Mammary epithelial cell (primary cell): ENCODE measurements at regions of chr3 and their contacts with region 1.

Region 1: GRCh38 chr3:33787328-33788009 is 11.0 kb upstream of the PDCD6IP start:
- DNase-seq: peak; percentile 58
- H3K4me3 ChIP-seq: no peak overlapping the region
- H3K27ac ChIP-seq: no peak overlapping the region
- H3K4me1 ChIP-seq: peaks cover 31% of the 10 kb centered on the region
- H3K27me3 ChIP-seq: no peaks in the 10 kb centered on the region
- CTCF ChIP-seq: peak; percentile 83 to 94

Region 2: DNA sequence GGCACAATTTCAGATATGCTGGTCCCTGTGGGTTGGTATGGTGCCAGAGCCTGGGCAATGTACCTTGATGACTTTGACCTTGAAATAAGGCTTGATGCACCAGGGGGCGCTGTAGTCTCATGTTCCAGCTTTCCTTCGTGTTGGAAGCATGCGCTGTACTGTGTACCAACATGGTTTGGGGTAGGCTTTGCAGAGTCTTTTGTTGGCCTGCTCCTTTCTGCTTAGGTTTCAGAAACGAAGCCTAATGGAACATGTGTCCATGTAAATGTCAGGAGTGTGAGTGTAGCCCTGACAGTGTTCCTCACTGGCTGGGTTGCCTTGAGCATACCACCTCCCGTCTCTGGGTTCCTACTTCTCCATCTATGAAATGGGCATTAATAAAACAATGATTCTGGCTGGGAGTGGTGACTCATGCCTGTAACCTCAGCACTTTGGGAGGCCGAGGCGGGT is 839.7 kb before region 1 on chr3:
- CTCF ChIA-PET with region 1: no interaction called
- dilution Hi-C with region 1: no loop called
- in situ Hi-C with region 1: no loop called
- intact Hi-C with region 1: loop called (anchors 5 kb)
- DNase-seq: peak; percentile 76
- H3K4me3 ChIP-seq: no peak overlapping the region
- H3K27ac ChIP-seq: no peak overlapping the region
- H3K4me1 ChIP-seq: no peaks in the 10 kb centered on the region
- H3K27me3 ChIP-seq: no peaks in the 10 kb centered on the region
- CTCF ChIP-seq: peak; percentile 73 to 87

Region 3: GRCh38 chr3:33392703-33393125 is 394.8 kb before region 1 on chr3:
- CTCF ChIA-PET with region 1: no interaction called
- dilution Hi-C with region 1: no loop called
- in situ Hi-C with region 1: no loop called
- intact Hi-C with region 1: loop called (anchors 10 kb)
- DNase-seq: peak; percentile 87
- H3K4me3 ChIP-seq: no peak overlapping the region
- H3K27ac ChIP-seq: peak overlapping the region; percentile 43
- H3K4me1 ChIP-seq: peaks cover 16% of the 10 kb centered on the region
- H3K27me3 ChIP-seq: no peaks in the 10 kb centered on the region
- CTCF ChIP-seq: no peak

Region 4: DNA sequence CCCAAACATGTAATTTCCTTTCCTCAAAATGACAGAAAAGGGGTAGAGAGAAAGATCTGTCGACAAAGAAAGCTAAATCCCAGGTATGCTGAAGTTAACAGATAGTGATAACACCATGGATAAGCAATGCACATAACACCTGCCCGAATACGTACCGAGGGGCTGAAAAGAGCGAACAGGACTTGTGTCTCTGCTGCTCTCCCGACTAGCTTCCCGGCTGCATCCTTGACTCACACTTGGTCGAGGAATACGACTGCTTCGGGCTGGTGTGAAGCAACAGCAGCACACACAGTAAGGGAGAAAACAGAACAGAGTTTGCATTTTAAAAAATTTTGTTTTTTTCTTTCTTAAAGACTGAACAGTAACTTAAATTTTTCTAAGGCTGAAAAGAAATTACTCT is 205.8 kb before region 1 on chr3:
- CTCF ChIA-PET with region 1: interaction called, 17 read pairs
- dilution Hi-C with region 1: no loop called
- in situ Hi-C with region 1: no loop called
- intact Hi-C with region 1: no loop called
- DNase-seq: no peak
- H3K4me3 ChIP-seq: no peak overlapping the region
- H3K27ac ChIP-seq: no peak overlapping the region
- H3K4me1 ChIP-seq: peaks cover 18% of the 10 kb centered on the region
- H3K27me3 ChIP-seq: no peaks in the 10 kb centered on the region
- CTCF ChIP-seq: no peak

Region 5: DNA sequence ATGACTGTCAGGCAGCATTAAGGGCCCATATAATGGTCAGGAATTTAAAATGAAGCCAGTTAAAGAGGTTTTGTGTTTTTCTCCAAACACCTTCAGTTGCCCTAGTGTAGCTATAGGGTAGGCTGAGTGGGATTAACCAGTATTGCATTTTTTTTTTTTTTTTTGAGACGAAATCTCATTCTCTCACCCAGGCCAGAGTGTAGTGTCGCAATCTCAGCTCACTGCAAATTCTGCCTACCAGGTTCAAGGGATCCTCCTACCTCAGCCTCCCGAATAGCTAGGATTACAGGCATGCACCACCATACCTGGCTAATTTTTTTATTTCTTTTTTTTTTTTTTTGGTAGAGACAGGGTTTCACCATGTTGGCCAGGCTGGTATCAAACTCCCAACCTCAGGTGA is 76.4 kb before region 1 on chr3:
- CTCF ChIA-PET with region 1: no interaction called
- dilution Hi-C with region 1: loop called (anchors 5 kb)
- in situ Hi-C with region 1: no loop called
- intact Hi-C with region 1: no loop called
- DNase-seq: no peak
- H3K4me3 ChIP-seq: no peak overlapping the region
- H3K27ac ChIP-seq: no peak overlapping the region
- H3K4me1 ChIP-seq: peaks cover 4% of the 10 kb centered on the region
- H3K27me3 ChIP-seq: no peaks in the 10 kb centered on the region
- CTCF ChIP-seq: no peak